Dorsolateral prefrontal cortex (tissue), 120 donors: ENCODE measurements at regions of chr19 and their contacts with region 1.

Region 1: GRCh38 chr19:39833464-39834286 is at the start of gene DYRK1B:
- DNase-seq: peak; percentile 96 to 99 (median 98)
- H3K4me3 ChIP-seq: peak within 1 kb of the TSS; percentile 77 to 100 (median 99)
- H3K27ac ChIP-seq: peak within 1 kb of the TSS; percentile 69 to 99 (median 94)
- H3K27me3 ChIP-seq: no peaks in the 10 kb centered on the region
- CTCF ChIP-seq: peak in 4 of 56 donors; percentile 13 to 30 (median 20)
- total RNA-seq, gene DYRK1B: 19.2 to 46.1 (median 32.8) TPM

Region 2: GRCh38 chr19:39805104-39805503 is 28.6 kb before region 1 on chr19:
- intact Hi-C with region 1: no loop called
- DNase-seq: no peak
- H3K4me3 ChIP-seq: no peak overlapping the region
- H3K27ac ChIP-seq: no peak overlapping the region
- H3K27me3 ChIP-seq: peaks cover 0 to 4% (median 0%) of the 10 kb centered on the region in 45 donors
- CTCF ChIP-seq: no peak

Region 3: DNA sequence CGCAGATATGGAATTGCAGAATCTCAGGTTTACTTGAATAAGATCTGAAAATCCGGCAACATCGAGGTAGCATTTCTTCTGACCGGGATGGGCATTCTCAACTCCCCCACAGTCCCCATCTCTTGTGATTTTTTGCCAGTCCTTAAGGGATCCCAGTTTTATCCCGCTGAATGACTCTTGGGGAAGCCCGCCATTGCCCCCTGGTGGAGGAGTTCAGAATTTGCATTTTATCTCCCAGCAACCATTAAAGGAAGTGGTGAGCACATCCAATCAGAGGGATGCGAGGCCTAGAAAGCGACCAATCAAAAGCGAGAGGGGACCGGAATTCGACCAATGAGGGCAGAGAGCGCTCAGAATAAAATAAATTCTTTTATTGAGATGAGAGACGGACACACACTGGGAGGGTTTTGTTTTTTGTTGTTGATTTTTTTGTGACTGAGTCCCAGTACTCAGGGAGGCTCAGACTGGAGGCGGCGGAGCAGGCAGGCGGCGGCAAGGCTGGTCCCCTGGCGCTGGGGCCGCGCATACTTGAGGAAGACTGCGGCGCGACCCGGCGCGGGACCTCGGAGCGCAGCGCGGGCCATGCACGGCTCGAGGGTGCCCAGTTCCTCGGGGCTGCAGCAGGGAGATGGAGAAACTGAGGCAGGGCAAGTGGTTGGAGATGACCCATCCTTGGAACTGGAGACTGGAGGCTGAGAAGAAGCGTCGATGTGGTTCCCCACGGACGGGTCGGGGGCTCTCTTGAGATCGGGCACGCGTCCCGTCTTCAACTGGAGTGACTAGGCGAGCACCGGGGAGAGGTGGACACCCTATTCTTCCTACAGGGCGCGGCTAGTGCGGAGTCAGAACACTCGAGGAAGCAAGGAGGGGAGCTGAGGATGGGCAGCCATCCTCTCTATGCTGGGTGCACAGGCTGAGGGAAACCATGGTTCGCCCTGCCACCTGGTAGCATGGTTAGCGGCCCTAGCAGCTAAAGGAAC is 388.5 kb after region 1 on chr19:
- intact Hi-C with region 1: loop called in 1 of 2 experiments (anchors 10 kb)
- DNase-seq: peak; percentile 52 to 93 (median 83)
- H3K4me3 ChIP-seq: peak overlapping the region in 3 of 59 donors; percentile 6 to 18 (median 9)
- H3K27ac ChIP-seq: peak overlapping the region in 1 of 59 donors; percentile 12
- H3K27me3 ChIP-seq: peaks cover 0 to 38% (median 8%) of the 10 kb centered on the region in 45 donors
- CTCF ChIP-seq: peak; percentile 84 to 98 (median 92)